PC-9 (cell line): ENCODE measurements at regions of chr7 and their contacts with region 1.

Region 1: DNA sequence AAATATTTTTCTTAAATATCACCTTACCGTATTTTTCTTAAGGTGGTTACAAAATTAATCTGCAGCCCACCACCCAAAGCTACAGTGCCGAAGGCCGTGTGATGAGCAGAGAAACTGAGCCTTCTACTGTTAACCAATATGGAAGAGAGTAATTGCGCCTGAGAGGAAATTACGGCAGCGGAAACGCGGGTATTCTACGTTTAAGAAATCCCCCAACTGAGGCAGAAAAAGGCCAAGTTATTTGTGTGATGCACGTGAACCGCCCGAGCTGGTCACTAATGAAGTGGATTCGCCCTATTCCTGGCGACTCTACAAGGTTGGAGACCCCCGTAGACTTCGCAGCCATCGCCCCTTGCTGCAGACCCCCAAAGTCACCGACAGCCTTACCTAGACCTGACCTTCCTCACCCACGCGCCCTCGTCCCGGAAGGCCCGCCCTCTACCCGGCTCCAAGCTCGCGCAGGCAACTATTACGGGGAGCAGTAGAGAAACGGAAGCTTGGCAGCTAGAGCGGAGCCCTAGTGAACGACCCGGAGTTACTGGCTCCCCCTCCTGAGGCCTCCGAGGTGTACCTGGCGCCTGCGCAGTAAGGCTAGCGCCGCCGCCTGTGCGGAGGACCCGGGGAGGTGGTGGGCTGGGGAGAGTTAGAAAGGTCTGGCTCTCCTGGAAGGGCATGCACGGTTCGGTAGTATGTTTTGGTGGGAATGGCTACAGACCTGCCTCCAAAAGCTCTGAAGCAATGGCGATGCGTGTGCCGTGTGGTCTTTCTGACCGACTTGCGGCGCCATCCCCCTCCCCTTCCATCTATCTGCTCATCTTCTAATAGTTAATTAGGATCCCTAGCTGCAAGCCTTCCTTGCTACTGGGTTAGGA is at the start of gene MRPS33:
- DNase-seq: peak; percentile 93 to 94
- H3K4me3 ChIP-seq: peak within 1 kb of the TSS; percentile 91
- H3K27ac ChIP-seq: peak within 1 kb of the TSS; percentile 42
- H3K4me1 ChIP-seq: peaks cover 16% of the 10 kb centered on the region
- H3K27me3 ChIP-seq: peaks cover 23% of the 10 kb centered on the region; the same call in 1 of the 2 replicates
- CTCF ChIP-seq: peak; percentile 43; the same call in 1 of the 2 replicates
- total RNA-seq, gene MRPS33: 70.8 and 84.4 TPM in 2 replicates

Region 2: GRCh38 chr7:140517546-140518369 is 497.0 kb before region 1 on chr7:
- CTCF ChIA-PET with region 1: interaction called, 3 read pairs
- POLR2A ChIA-PET with region 1: no interaction called
- intact Hi-C with region 1: loop called (anchors 1 kb)
- DNase-seq: peak; percentile 78 to 92
- H3K4me3 ChIP-seq: no peak overlapping the region
- H3K27ac ChIP-seq: no peak overlapping the region
- H3K4me1 ChIP-seq: peaks cover 11% of the 10 kb centered on the region
- H3K27me3 ChIP-seq: no peaks in the 10 kb centered on the region
- CTCF ChIP-seq: peak; percentile 96

Region 3: DNA sequence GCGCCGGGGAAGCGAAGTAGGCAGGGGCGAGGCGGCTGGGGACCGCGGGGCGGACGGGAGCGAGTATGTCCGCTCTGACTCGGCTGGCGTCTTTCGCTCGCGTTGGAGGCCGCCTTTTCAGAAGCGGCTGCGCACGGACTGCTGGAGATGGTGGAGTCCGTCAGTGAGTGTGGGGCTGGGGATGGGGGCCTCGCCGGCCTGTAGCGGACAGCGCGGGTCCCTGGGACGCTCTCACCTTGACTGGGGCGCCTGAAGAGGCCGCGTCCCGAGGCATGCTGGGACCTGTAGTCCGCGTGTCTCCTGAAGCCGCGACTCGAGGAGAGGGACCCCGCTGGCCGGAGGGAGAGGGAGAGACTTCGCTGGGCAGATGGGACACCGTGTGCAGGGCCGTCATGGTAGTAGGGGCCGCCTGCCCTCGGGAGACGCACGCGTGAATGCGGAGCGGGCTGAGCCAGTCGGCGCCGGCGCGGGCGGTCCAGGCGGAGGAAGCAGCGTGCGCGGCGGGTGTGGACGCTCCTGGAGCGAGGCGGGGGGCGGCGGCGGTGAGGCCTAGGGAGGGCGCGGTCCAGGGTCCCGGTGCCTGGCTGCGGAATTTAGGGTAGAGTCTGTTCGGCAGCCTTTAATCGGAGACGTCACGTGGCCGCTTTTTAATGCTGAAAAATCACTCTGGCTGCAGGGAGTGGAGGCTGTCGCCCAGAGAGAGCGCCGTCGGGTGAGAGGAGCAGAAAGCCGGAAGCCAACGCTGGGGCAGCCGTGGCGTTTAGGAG is 317.9 kb before region 1 on chr7 and contains the start of gene NDUFB2:
- CTCF ChIA-PET with region 1: no interaction called
- POLR2A ChIA-PET with region 1: interaction called, 28 read pairs
- intact Hi-C with region 1: no loop called
- DNase-seq: peak; percentile 60 to 91
- H3K4me3 ChIP-seq: peak within 1 kb of the TSS; percentile 96
- H3K27ac ChIP-seq: peak within 1 kb of the TSS; percentile 53
- H3K4me1 ChIP-seq: peaks cover 15% of the 10 kb centered on the region
- H3K27me3 ChIP-seq: no peaks in the 10 kb centered on the region
- CTCF ChIP-seq: no peak
- total RNA-seq, gene NDUFB2: 180 and 199 TPM in 2 replicates

Region 4: DNA sequence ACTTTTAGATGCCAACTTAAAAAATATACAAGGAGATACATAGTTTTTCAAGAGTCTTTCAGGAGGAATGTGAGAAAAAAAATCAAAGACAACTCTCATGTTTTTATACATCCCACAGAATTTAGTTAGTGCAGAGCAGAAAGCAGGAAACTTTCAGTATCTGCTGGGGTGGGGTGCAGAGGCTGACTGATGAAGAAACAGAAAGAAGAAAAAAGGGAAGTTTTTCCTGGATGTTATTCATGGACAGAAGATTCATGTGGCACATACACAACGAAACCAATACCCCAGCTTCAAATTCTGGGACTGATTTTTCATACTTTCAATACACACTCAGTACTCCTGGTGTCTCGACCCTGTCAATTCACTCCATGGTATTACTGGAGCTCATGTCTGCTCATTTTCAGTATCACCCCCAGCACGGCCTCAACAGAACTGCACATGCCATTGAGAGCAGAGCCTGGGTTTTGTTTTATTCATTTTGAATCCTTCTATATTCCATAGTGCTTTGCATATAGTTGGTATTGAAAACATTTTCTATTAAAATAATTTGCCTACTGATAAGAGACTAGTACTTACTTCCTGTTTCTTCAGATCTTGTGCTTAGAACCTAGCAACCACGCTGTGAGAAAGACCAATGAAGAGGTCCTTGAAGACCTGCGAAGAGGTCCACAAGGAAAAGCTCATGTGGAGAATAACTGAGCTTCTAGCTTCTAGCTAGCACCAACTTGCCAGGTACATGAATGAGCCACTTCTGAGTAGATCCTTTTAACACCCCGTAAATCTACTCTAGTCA is 269.3 kb before region 1 on chr7:
- CTCF ChIA-PET with region 1: no interaction called
- POLR2A ChIA-PET with region 1: no interaction called
- intact Hi-C with region 1: no loop called
- DNase-seq: no peak
- H3K4me3 ChIP-seq: no peak overlapping the region
- H3K27ac ChIP-seq: no peak overlapping the region
- H3K4me1 ChIP-seq: no peaks in the 10 kb centered on the region
- H3K27me3 ChIP-seq: no peaks in the 10 kb centered on the region
- CTCF ChIP-seq: no peak

Region 5: GRCh38 chr7:140902303-140902953 is 112.3 kb before region 1 on chr7:
- CTCF ChIA-PET with region 1: no interaction called
- POLR2A ChIA-PET with region 1: no interaction called
- intact Hi-C with region 1: no loop called
- DNase-seq: no peak
- H3K4me3 ChIP-seq: no peak overlapping the region
- H3K27ac ChIP-seq: no peak overlapping the region
- H3K4me1 ChIP-seq: no peaks in the 10 kb centered on the region; the same call in 1 of the 2 replicates
- H3K27me3 ChIP-seq: no peaks in the 10 kb centered on the region
- CTCF ChIP-seq: no peak

Region 6: GRCh38 chr7:140924019-140924820 is 90.5 kb before region 1 on chr7:
- CTCF ChIA-PET with region 1: no interaction called
- POLR2A ChIA-PET with region 1: no interaction called
- intact Hi-C with region 1: loop called (anchors 2 kb)
- DNase-seq: peak; percentile 51 to 69
- H3K4me3 ChIP-seq: peak overlapping the region; percentile 98
- H3K27ac ChIP-seq: peak overlapping the region; percentile 85
- H3K4me1 ChIP-seq: peaks cover 50% of the 10 kb centered on the region
- H3K27me3 ChIP-seq: no peaks in the 10 kb centered on the region
- CTCF ChIP-seq: peak; percentile 66

Region 7: DNA sequence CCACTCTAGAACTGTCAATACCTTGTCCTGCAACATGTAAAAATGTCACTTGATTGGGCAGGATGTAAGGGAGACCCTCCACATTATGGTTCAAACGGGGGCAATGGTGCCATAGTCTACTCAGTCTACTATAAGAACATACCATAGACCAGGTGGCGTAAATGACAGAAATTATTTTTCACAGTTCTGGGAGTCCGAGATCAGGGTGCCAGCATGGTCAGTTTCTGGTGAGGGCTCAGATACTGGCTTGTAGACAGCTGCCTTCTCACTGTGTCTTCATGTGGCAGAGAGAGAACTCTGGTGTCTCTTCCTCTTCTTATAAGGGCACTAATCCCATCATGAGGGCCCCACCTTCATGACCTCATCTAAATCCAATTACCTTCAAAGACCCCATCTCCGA is 40.4 kb after region 1 on chr7:
- CTCF ChIA-PET with region 1: no interaction called
- POLR2A ChIA-PET with region 1: no interaction called
- intact Hi-C with region 1: no loop called
- DNase-seq: no peak
- H3K4me3 ChIP-seq: no peak overlapping the region
- H3K27ac ChIP-seq: no peak overlapping the region
- H3K4me1 ChIP-seq: no peaks in the 10 kb centered on the region
- H3K27me3 ChIP-seq: peaks cover 66% of the 10 kb centered on the region
- CTCF ChIP-seq: no peak

Region 8: GRCh38 chr7:141737834-141738591 is 723.3 kb after region 1 on chr7 and contains the start of gene SSBP1:
- CTCF ChIA-PET with region 1: no interaction called
- POLR2A ChIA-PET with region 1: interaction called, 5 read pairs
- intact Hi-C with region 1: loop called (anchors 1 kb)
- DNase-seq: peak; percentile 93 to 95
- H3K4me3 ChIP-seq: peak within 1 kb of the TSS; percentile 100
- H3K27ac ChIP-seq: peak within 1 kb of the TSS; percentile 77
- H3K4me1 ChIP-seq: peaks cover 27% of the 10 kb centered on the region
- H3K27me3 ChIP-seq: no peaks in the 10 kb centered on the region
- CTCF ChIP-seq: peak; percentile 83
- total RNA-seq, gene SSBP1: 150 and 193 TPM in 2 replicates